ENCODE measurements at regions of chr1 and their contacts with region 1.

Region 1: GRCh38 chr1:19495799-19496624 is 10.7 kb upstream of the CAPZB start:
- DNase-seq: no peak
- H3K4me3 ChIP-seq: no peak overlapping the region
- H3K27ac ChIP-seq: peak overlapping the region in 1 of 2 donors; percentile 12
- H3K4me1 ChIP-seq: peaks cover 0 to 8% (median 7%) of the 10 kb centered on the region in 4 donors
- H3K27me3 ChIP-seq: no peaks in the 10 kb centered on the region
- CTCF ChIP-seq: no peak

Region 2: GRCh38 chr1:19547814-19548213 is 51.8 kb after region 1 on chr1:
- intact Hi-C with region 1: no loop called
- DNase-seq: no peak
- H3K4me3 ChIP-seq: no peak overlapping the region
- H3K27ac ChIP-seq: no peak overlapping the region
- H3K4me1 ChIP-seq: peaks cover 0 to 5% (median 0%) of the 10 kb centered on the region in 4 donors
- H3K27me3 ChIP-seq: no peaks in the 10 kb centered on the region
- CTCF ChIP-seq: no peak

Region 3: DNA sequence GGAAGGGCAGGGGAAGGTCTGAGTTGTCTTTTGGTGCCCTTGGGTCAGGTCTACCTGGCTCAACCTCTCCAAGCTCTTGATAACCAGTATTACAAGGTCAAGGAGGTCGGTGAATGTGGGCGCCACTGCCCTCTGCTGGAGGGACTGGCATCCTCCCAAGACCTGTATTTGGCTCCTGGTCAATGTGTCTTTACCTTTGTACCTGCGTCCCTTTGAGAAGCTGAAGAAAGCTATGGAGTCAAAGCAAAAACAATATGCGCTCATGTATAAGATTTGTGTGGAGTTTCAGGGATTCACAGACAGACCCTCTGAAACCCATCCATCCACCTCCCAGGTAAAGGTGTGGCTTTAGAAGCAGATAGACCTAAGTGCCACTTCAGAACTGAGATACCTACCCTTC is 86.3 kb after region 1 on chr1:
- intact Hi-C with region 1: loop called (anchors 10 kb)
- DNase-seq: peak in 1 of 2 donors; percentile 34
- H3K4me3 ChIP-seq: no peak overlapping the region
- H3K27ac ChIP-seq: no peak overlapping the region
- H3K4me1 ChIP-seq: no peaks in the 10 kb centered on the region
- H3K27me3 ChIP-seq: no peaks in the 10 kb centered on the region
- CTCF ChIP-seq: peak; percentile 44 to 47

Measured in tibial artery (tissue), 4 donors.